ENCODE measurements at regions of chr19 and their contacts with region 1.

Region 1: DNA sequence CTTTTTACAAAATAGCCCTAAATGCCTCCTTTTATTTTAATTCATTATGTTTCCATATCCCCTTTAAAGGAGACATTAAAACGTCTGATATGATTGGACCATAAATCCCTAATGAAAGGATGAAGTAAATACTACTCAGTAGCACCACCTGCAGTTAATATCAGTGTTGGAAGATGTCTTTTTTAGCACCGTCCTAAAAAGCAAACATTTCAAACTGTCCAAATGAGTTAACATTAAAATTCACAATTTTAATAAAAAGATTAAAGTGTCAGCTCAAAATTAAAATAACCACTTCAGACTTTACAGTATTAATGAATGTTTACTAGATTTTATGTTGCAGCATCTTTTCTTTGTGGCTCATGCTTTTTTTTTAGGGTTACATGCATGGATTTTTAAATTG is 12.3 kb downstream of the ZNF507 start:
- DNase-seq: no peak
- H3K4me3 ChIP-seq: no peak overlapping the region
- H3K27ac ChIP-seq: no peak overlapping the region
- H3K4me1 ChIP-seq: no peaks in the 10 kb centered on the region
- H3K27me3 ChIP-seq: no peaks in the 10 kb centered on the region
- CTCF ChIP-seq: peak; percentile 59
- EP300 ChIP-seq: no peak
- RAD21 ChIP-seq: peak; percentile 35; the same call in 1 of the 2 replicates

Region 2: DNA sequence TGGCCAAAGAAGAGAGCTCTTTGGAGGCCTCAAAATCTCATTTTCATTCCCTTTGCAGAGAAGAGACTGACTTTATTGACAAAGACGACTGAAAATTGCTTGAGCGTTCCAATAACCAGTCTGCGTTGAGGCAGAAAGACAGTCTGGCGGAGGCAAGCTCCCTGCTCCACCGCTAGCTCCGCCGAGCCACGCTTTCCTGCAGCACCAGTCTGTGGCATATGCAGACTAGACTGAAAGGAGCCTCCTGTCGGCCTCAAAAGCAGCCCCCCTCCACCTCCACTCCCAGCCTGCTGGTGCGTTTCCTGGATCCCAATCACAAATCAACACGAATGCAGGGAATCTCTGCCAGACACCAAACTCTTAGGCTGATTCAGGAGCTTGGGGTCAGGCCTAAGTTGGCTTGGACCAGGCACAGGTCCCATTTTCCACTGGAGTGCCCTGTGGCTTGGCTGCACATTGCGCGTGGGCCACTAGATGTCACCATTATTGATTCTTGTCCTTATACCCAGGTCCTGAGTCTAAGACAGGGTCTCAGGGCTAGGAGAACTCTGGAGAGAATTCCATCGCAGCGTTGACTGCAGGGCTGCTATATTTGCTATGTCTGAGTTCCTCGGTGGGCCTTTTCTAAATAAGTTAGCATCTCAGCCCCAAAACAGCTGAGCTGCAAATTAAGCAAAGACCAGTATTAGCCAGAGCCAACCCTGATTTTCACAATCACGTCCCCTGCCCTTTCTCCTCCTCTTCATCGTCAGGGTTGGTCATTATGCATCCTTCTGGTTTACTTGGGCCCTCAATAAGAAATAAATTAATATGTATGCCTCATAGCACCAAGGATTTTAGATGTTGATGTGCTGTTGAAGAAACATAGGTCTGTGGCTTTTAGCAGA is 17.5 kb before region 1 on chr19:
- CTCF ChIA-PET with region 1: interaction called, 31 read pairs
- POLR2A ChIA-PET with region 1: interaction called, 6 read pairs
- DNase-seq: peak; percentile 74
- H3K4me3 ChIP-seq: no peak overlapping the region
- H3K27ac ChIP-seq: no peak overlapping the region
- H3K4me1 ChIP-seq: no peaks in the 10 kb centered on the region
- H3K27me3 ChIP-seq: no peaks in the 10 kb centered on the region
- CTCF ChIP-seq: peak; percentile 72
- EP300 ChIP-seq: no peak
- RAD21 ChIP-seq: peak; percentile 60

Region 3: DNA sequence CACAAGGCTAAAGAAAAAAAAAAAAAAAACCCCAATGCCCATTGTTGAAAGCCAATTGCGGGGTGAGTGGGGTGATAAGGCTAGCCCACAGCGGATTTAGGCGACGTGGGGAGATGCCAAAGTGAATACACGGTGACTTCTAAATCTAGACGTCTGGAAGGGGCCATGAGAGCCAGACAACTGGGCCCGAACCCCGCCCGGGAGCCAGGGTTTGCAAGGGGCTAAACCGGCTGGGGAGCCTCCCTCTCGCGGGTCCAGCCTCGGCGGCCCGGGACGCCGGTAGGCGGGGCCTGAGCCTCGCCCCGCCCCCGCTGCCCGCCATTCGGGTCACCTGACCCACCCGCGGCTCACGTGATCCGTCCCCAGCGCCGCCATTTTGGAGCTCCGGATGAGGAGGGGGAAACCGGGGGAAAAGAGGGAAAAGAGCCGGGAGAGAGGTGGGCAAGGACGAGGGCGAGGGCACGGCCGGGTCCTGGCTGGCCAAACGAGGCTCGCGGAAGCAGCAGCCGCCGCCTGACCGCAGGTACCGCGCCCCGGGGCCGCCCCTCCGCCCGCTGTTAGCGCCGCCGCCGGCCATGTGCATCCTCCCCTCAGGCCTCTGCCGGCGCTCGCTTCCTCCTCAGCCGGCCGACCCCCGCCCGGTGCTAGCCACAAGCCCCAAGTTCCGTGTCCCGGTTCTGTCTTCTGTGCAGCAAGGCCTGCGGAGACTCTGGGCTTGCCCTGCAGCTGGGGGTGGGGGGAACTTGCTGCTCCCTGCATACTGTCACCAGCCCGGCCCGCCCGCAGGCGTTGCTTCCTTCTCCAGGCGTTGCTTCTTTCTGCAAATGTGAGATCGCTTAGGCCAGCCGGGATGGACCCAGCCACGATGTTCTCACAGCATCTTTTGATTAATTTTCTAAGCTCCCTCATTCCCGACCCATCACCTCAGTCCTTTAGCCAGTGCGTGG is 12.2 kb before region 1 on chr19 and contains the start of gene ZNF507:
- CTCF ChIA-PET with region 1: interaction called, 31 read pairs
- POLR2A ChIA-PET with region 1: interaction called, 6 read pairs
- DNase-seq: peak; percentile 99
- H3K4me3 ChIP-seq: peak within 1 kb of the TSS; percentile 84 to 99
- H3K27ac ChIP-seq: peak within 1 kb of the TSS; percentile 70 to 86
- H3K4me1 ChIP-seq: peaks cover 5 to 11% of the 10 kb centered on the region in 2 experiments; a peak in 3 of 4 replicates
- H3K27me3 ChIP-seq: no peaks in the 10 kb centered on the region
- CTCF ChIP-seq: peak; percentile 28; the same call in 1 of the 2 replicates
- EP300 ChIP-seq: peak in 1 of 2 experiments; percentile 45; a peak in 1 of 4 replicates
- RAD21 ChIP-seq: no peak
- polyA plus RNA-seq, gene ZNF507: 6.8 and 9.1 TPM in 2 replicates

Region 4: GRCh38 chr19:32427536-32427935 is 69.8 kb after region 1 on chr19:
- CTCF ChIA-PET with region 1: no interaction called
- POLR2A ChIA-PET with region 1: no interaction called
- DNase-seq: no peak
- H3K4me3 ChIP-seq: no peak overlapping the region
- H3K27ac ChIP-seq: no peak overlapping the region
- H3K4me1 ChIP-seq: no peaks in the 10 kb centered on the region
- H3K27me3 ChIP-seq: no peaks in the 10 kb centered on the region
- CTCF ChIP-seq: no peak
- EP300 ChIP-seq: no peak
- RAD21 ChIP-seq: no peak

Region 5: GRCh38 chr19:32543107-32543900 is 185.6 kb after region 1 on chr19:
- CTCF ChIA-PET with region 1: no interaction called
- POLR2A ChIA-PET with region 1: no interaction called
- DNase-seq: no peak
- H3K4me3 ChIP-seq: no peak overlapping the region
- H3K27ac ChIP-seq: no peak overlapping the region
- H3K4me1 ChIP-seq: no peaks in the 10 kb centered on the region
- H3K27me3 ChIP-seq: no peaks in the 10 kb centered on the region
- CTCF ChIP-seq: no peak
- EP300 ChIP-seq: no peak
- RAD21 ChIP-seq: no peak

Measured in SK-N-SH (cell line).